OCI-LY7 (cell line): ENCODE measurements at regions of chr5 and their contacts with region 1.

Region 1: DNA sequence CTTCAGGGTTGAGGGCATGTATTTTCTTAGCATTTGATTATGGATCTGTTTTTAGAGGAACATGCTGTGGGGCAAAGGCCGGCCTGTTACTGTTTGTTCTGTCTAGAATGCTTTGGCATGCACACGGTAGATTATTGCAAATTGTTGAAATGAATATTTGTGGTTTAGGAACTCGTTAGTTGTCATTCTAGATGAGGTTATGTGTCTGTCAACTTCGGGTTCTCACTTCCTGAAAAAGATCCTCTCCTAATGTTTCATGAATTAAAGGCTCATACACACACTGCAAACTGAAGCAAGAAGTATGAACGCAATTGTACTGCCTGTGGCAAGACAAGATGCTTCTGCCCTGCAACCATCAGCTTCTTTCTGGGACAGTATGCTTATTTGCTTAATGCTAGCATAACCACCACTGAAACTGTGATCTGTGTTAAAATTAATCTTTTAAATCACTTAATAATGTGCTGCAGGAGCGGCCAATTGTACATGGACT is 99.6 kb downstream of the BASP1 start:
- DNase-seq: peak; percentile 76
- H3K4me3 ChIP-seq: peak overlapping the region; percentile 67
- H3K27ac ChIP-seq: peak overlapping the region; percentile 98
- H3K4me1 ChIP-seq: peaks cover 66% of the 10 kb centered on the region
- CTCF ChIP-seq: no peak

Region 2: DNA sequence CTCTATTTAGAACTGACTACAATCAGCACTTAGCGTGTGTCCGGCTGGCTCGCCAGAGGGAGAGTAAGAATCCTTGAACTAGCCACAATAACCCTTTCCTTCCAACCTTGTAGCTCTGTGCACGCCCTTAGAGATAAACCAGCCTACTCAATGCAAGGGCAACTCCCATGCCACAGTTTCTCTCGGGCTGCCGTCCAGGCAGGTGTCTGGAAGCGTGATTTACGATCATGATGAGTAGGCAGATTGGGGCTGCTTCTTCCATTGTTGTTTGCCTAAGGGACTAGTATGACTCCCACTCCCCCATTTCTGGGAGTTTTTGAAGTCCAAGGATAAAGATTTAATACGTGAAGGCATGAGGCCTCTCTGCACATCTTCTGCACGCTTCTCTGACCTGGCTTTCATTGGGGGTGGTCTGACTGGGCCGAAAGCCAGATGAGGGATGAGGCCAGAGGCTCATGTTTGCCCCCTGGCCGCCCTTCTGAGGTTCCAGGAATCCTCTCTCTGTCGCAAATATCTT is 247.0 kb before region 1 on chr5:
- CTCF ChIA-PET with region 1: no interaction called
- POLR2A ChIA-PET with region 1: no interaction called
- intact Hi-C with region 1: no loop called
- DNase-seq: no peak
- H3K4me3 ChIP-seq: no peak overlapping the region
- H3K27ac ChIP-seq: no peak overlapping the region
- H3K4me1 ChIP-seq: no peaks in the 10 kb centered on the region
- CTCF ChIP-seq: no peak

Region 3: DNA sequence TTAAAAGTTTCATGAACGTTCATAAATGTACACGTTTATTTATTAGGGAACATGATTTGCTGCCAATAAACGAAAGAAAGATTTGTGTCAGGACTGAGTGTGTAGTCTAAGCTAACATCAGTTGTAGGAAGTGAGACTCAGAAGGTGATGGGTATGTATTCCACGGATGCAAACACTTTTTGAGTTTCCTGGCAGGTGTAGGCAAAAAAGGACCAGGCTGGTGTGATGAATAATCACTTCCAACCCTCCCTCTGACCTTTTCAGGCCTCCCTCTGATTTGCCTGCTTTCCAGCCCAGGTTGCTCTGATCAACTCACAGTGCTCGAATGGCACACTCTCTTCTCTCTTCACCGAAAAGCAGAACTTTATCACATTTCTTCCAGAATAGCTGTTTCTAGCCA is 47.8 kb before region 1 on chr5:
- CTCF ChIA-PET with region 1: no interaction called
- POLR2A ChIA-PET with region 1: interaction called, 5 read pairs
- intact Hi-C with region 1: loop called (anchors 5 kb)
- DNase-seq: peak; percentile 72
- H3K4me3 ChIP-seq: peak overlapping the region; percentile 45
- H3K27ac ChIP-seq: peak overlapping the region; percentile 74
- H3K4me1 ChIP-seq: peaks cover 86% of the 10 kb centered on the region
- CTCF ChIP-seq: no peak

Region 4: DNA sequence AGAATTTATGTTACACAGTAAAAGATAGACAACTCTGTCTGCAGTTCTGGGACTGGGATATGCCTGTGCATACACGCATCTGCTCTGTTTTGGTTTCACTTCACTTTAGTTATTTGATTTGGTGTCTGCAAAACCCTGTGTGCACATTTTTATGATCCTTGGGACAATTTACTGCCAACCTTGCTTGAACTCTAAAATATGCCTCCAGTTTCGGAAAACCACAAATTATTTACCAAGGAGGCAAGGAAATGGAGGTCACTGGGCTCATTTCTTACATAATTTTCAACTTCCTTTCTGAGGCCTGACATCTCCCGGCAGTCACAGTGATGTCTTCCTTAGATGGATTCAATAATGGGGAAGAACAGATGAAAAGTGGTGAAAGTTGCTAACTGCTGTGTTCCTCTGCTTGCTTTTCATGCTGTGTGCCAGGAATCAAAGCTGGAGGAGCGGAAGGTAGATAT is 119.8 kb after region 1 on chr5:
- CTCF ChIA-PET with region 1: no interaction called
- POLR2A ChIA-PET with region 1: no interaction called
- intact Hi-C with region 1: loop called (anchors 2 kb)
- DNase-seq: peak; percentile 44
- H3K4me3 ChIP-seq: peak overlapping the region; percentile 42
- H3K27ac ChIP-seq: no peak overlapping the region
- H3K4me1 ChIP-seq: peaks cover 25% of the 10 kb centered on the region
- CTCF ChIP-seq: no peak